ENCODE measurements at regions of chr17 and their contacts with region 1.

Region 1: GRCh38 chr17:80899402-80900268 is 92.0 kb upstream of the CHMP6 start:
- DNase-seq: peak; percentile 91
- H3K4me3 Mint-ChIP-seq: no peak overlapping the region
- H3K27ac Mint-ChIP-seq: no peak overlapping the region
- H3K4me1 Mint-ChIP-seq: peaks cover 56% of the 10 kb centered on the region
- H3K27me3 Mint-ChIP-seq: no peaks in the 10 kb centered on the region

Region 2: DNA sequence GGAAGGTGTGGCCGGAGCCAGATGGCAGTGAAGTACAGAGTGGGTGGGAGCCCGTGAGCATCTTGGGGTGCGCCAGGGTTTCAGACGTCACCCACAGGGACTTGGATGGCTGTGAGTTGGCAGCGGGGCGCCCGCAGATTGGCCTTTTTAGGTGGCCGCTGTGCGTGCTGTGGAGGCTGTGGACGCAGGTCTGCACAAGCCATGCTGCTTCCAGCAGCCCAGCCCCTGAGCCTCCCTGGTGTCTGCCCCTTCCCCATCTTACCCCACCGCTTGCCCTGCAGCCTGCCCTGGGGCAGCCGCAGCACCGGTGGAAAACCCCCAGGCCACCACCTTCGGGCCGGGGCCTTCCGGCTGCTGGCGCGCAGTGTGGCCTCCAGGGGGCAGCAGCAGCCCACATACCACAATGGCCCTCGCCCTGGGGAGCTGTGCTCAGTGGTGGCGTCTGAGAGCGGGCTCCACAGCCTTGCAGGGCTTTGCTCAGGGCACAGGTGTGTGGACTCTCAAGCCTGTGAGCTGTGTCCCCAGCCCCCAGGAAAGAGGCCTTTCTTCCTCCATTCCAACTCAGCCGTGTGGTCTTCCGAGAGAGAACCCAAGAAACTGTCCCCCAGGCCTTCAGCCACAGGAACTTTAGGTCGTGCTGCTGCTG is 472.8 kb before region 1 on chr17:
- CTCF ChIA-PET with region 1: interaction called, 22 read pairs
- POLR2A ChIA-PET with region 1: no interaction called
- intact Hi-C with region 1: loop called (anchors 1 kb)
- DNase-seq: peak; percentile 91
- H3K4me3 Mint-ChIP-seq: no peak overlapping the region
- H3K27ac Mint-ChIP-seq: no peak overlapping the region
- H3K4me1 Mint-ChIP-seq: peaks cover 8% of the 10 kb centered on the region
- H3K27me3 Mint-ChIP-seq: no peaks in the 10 kb centered on the region

Region 3: GRCh38 chr17:80559825-80560251 is 339.8 kb before region 1 on chr17:
- CTCF ChIA-PET with region 1: no interaction called
- POLR2A ChIA-PET with region 1: no interaction called
- intact Hi-C with region 1: no loop called
- DNase-seq: no peak
- H3K4me3 Mint-ChIP-seq: no peak overlapping the region
- H3K27ac Mint-ChIP-seq: no peak overlapping the region
- H3K4me1 Mint-ChIP-seq: peaks cover 7% of the 10 kb centered on the region
- H3K27me3 Mint-ChIP-seq: no peaks in the 10 kb centered on the region

Region 4: DNA sequence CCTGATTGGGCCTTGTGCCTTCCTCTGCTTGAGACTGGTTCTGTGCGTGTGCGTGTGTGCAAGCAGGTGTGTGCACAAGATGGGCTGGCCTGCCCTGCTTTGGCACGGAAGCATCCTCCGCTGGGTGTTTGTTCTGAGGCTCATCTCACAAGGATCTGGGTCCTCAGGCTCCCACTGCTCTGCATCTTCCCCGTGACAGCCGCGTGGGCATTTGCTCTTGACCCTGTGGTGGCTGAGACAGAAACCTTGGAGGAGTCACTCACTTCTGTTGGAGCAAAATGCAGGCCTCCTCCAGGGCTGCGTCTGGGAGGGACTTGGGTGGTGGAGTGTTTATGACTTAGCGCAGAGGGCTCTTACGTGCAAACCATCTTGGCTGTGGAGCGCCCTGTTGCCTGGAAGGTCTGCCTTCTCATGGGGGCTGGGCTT is 235.8 kb before region 1 on chr17:
- CTCF ChIA-PET with region 1: no interaction called
- POLR2A ChIA-PET with region 1: no interaction called
- intact Hi-C with region 1: loop called (anchors 2 kb)
- DNase-seq: peak; percentile 62
- H3K4me3 Mint-ChIP-seq: no peak overlapping the region
- H3K27ac Mint-ChIP-seq: peak overlapping the region; percentile 60
- H3K4me1 Mint-ChIP-seq: peaks cover 58% of the 10 kb centered on the region
- H3K27me3 Mint-ChIP-seq: no peaks in the 10 kb centered on the region

Region 5: GRCh38 chr17:80855948-80856862 is 43.4 kb before region 1 on chr17:
- CTCF ChIA-PET with region 1: interaction called, 6 read pairs
- POLR2A ChIA-PET with region 1: interaction called, 3 read pairs
- intact Hi-C with region 1: loop called (anchors 2 kb)
- DNase-seq: peak; percentile 96
- H3K4me3 Mint-ChIP-seq: peak overlapping the region; percentile 24
- H3K27ac Mint-ChIP-seq: peak overlapping the region; percentile 94
- H3K4me1 Mint-ChIP-seq: peaks cover 59% of the 10 kb centered on the region
- H3K27me3 Mint-ChIP-seq: no peaks in the 10 kb centered on the region

Region 6: GRCh38 chr17:80876950-80877728 is 22.5 kb before region 1 on chr17:
- CTCF ChIA-PET with region 1: interaction called, 10 read pairs
- POLR2A ChIA-PET with region 1: interaction called, 9 read pairs
- intact Hi-C with region 1: no loop called
- DNase-seq: peak; percentile 89
- H3K4me3 Mint-ChIP-seq: peak overlapping the region; percentile 70
- H3K27ac Mint-ChIP-seq: peak overlapping the region; percentile 98
- H3K4me1 Mint-ChIP-seq: peaks cover 49% of the 10 kb centered on the region
- H3K27me3 Mint-ChIP-seq: no peaks in the 10 kb centered on the region

Region 7: GRCh38 chr17:81094509-81095382 is 195.1 kb after region 1 on chr17:
- CTCF ChIA-PET with region 1: no interaction called
- POLR2A ChIA-PET with region 1: no interaction called
- intact Hi-C with region 1: no loop called
- DNase-seq: peak; percentile 97
- H3K4me3 Mint-ChIP-seq: no peak overlapping the region
- H3K27ac Mint-ChIP-seq: peak overlapping the region; percentile 75
- H3K4me1 Mint-ChIP-seq: peaks cover 46% of the 10 kb centered on the region
- H3K27me3 Mint-ChIP-seq: no peaks in the 10 kb centered on the region

Measured in activated CD4-positive, alpha-beta memory T cell treated with anti-CD3 and anti-CD28 coated beads for 36 hours (primary cell).